ENCODE measurements at regions of chr2 and their contacts with region 1.

Region 1: DNA sequence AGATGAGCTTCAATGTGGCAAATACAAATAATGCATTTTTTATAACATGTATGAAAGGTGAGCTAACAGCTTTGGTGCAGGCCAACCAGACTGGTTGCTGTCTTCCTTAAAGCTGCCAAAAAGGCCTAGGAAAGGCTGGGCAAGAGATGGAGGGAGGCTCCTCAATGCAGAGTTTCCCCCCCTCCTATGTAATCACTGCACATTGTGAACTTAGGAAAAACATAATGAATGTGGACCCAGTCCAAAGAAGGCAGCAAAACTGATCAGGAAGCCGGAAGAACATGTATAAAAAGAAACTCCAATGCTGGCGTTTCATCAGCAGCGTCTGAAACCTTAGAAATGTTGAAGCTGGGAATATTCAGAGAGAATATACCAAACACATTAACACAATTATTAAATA is 84.2 kb upstream of the LYPD6 start:
- DNase-seq: no peak
- ATAC-seq: no peak
- H3K4me3 ChIP-seq: no peak overlapping the region
- H3K27ac ChIP-seq: no peak overlapping the region
- H3K4me1 ChIP-seq: no peaks in the 10 kb centered on the region
- H3K27me3 ChIP-seq: no peaks in the 10 kb centered on the region
- CTCF ChIP-seq: no peak

Region 2: GRCh38 chr2:149221898-149222297 is 24.3 kb before region 1 on chr2:
- intact Hi-C with region 1: no loop called
- DNase-seq: no peak
- ATAC-seq: no peak
- H3K4me3 ChIP-seq: no peak overlapping the region
- H3K27ac ChIP-seq: no peak overlapping the region
- H3K4me1 ChIP-seq: no peaks in the 10 kb centered on the region
- H3K27me3 ChIP-seq: peaks cover 0 to 3% (median 0%) of the 10 kb centered on the region in 7 donors
- CTCF ChIP-seq: no peak

Region 3: DNA sequence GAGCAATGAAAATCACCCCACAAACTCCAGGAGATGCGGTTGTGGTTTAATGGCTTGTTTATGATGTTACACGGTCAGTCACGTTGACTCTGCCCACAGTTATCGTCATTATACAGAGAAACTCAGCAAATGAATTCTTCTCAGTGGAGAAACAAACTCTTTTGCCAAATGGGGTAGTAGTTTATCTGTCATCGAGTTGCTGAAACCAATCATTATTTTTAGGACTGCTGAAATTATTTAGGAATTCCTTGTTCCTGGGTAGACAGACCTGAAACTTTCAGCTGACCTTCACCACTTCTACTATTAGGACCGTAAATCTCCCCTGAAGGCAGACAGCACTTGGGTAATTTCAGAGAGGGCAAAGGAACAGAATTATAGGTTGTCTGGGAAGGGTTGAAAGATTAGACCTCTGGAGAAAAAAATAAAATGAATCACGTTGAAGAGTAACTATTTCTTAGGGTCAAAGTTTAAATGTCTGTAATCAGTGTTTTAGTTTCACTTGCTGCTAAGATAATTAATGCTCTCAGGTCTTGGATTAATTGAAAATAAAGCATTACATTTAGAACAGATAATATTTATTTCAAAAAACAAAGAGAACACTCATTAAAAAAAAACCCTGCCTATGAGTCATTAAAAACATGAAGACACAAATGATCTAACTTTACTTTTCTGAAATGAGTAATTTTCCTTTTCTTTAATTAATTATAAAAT is 32.1 kb after region 1 on chr2:
- intact Hi-C with region 1: loop called in 1 of 10 experiments (anchors 1 kb)
- DNase-seq: no peak
- ATAC-seq: no peak
- H3K4me3 ChIP-seq: no peak overlapping the region
- H3K27ac ChIP-seq: no peak overlapping the region
- H3K4me1 ChIP-seq: no peaks in the 10 kb centered on the region
- H3K27me3 ChIP-seq: no peaks in the 10 kb centered on the region
- CTCF ChIP-seq: no peak

Measured in heart right ventricle (tissue), 16 donors.